Lower leg skin (tissue), 4 donors: ENCODE measurements at regions of chr1 and their contacts with region 1.

Region 1: DNA sequence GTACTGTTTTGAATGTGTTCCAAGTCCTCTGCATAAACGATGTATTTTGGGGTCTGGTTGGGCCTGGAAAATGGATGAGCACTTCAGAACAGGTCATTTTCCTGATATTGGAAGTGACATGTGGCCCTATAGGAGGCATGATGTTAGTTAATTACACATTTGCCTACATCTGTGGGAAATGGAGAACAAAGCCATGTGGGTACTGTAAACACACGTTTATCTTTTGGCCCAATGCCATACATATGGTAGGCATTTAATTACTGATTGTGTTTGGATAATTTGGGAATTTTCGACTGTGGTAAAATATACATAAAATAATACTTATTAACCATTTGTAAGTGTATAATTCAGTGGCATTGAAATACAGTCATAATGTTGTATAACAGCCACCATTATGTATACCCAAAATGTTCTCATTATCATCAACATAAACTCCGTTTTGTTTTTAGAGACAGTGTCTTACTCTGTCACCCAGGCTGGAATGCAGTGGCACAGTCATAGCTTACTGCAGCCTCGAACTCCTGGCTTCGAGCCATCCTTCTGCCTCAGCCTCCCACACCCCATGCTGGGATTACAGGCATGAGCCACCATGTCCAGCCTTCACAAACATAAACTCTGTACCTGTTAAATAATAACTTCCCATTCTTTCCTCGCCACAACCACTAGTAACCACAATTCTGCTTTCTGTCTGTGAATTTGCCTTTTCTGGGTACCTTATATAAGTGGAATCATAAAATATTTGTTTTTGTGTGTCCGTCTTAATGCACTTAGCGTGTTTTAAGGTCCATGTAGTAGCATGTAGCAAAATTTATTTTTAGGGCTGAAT is 11.9 kb upstream of the RNPEP start:
- DNase-seq: no peak
- H3K4me3 ChIP-seq: no peak overlapping the region
- CTCF ChIP-seq: no peak
- POLR2A ChIP-seq: no peak

Region 2: GRCh38 chr1:201890223-201890622 is 80.3 kb before region 1 on chr1:
- intact Hi-C with region 1: loop called (anchors 5 kb)
- DNase-seq: no peak
- H3K4me3 ChIP-seq: no peak overlapping the region
- CTCF ChIP-seq: no peak
- POLR2A ChIP-seq: no peak

Region 3: GRCh38 chr1:201937624-201938213 is 32.8 kb before region 1 on chr1:
- intact Hi-C with region 1: loop called (anchors 1 kb)
- DNase-seq: no peak
- H3K4me3 ChIP-seq: no peak overlapping the region
- CTCF ChIP-seq: no peak
- POLR2A ChIP-seq: no peak